ENCODE measurements at regions of chr16 and their contacts with region 1.

Region 1: DNA sequence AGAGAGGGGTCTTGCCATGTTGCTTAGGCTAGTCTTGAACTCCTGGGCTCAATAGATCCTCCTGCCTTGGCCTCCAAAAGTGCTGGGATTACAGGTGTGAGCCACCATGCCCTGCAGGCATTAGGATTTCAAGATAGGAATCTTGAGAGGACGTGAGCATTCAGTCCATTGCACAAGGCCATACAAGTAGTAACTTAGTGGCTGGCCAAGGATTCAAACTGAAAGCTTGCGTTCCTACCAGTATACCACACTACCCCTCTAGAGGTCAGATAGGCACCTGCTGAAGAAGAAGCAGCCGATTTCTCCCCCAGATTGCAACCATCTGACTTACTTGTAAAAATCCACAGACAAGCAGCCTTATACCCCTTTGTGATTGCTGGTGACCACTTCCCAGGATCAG is 80.9 kb downstream of the CACNG3 start:
- DNase-seq: no peak
- H3K4me3 ChIP-seq: no peak overlapping the region
- H3K27ac ChIP-seq: no peak overlapping the region
- H3K4me1 ChIP-seq: no peaks in the 10 kb centered on the region
- CTCF ChIP-seq: no peak

Region 2: DNA sequence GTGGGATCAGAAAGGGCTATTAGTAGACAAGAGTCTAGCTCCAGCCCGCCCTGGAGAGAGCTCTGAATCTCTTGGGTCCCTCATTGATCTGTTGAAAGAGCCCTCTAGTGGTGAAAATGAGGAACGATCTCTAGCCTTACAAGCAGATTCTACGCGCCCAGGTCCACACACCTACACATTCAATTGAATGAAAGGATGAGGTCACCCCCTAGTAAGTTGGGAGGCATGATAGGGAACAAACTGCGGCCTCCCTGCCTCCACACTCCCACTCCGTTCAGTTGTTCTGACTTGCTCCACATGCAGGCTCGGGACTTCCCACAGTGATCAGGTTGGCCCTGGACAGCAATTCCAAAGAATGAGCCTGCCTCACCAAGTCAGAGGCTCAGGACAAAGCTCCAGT is 83.8 kb before region 1 on chr16:
- CTCF ChIA-PET with region 1: no interaction called
- POLR2A ChIA-PET with region 1: no interaction called
- intact Hi-C with region 1: no loop called
- DNase-seq: peak; percentile 78
- H3K4me3 ChIP-seq: no peak overlapping the region
- H3K27ac ChIP-seq: no peak overlapping the region
- H3K4me1 ChIP-seq: peaks cover 35% of the 10 kb centered on the region
- CTCF ChIP-seq: peak; percentile 86

Region 3: DNA sequence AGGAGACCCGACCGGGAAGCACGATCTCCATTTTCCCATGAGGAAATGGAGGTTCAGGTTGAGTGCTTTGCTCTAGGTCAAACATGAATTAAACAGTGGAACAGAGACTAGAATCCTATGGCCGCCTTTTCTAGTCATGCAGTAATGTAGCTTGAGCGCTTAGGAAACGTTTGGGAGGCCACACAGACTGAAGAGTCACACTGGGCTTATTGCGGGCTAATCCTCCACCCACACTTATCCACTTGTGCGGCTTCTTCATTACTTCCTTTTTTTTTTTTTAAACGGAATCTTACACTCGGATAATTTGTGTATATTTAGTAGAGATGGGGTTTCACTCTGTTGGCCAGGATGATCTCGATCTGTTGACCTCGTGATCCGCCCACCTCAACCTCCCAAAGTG is 54.9 kb before region 1 on chr16:
- CTCF ChIA-PET with region 1: no interaction called
- POLR2A ChIA-PET with region 1: interaction called, 11 read pairs
- intact Hi-C with region 1: no loop called
- DNase-seq: no peak
- H3K4me3 ChIP-seq: no peak overlapping the region
- H3K27ac ChIP-seq: no peak overlapping the region
- H3K4me1 ChIP-seq: no peaks in the 10 kb centered on the region
- CTCF ChIP-seq: no peak